ENCODE measurements at regions of chr17 and their contacts with region 1.

Region 1: DNA sequence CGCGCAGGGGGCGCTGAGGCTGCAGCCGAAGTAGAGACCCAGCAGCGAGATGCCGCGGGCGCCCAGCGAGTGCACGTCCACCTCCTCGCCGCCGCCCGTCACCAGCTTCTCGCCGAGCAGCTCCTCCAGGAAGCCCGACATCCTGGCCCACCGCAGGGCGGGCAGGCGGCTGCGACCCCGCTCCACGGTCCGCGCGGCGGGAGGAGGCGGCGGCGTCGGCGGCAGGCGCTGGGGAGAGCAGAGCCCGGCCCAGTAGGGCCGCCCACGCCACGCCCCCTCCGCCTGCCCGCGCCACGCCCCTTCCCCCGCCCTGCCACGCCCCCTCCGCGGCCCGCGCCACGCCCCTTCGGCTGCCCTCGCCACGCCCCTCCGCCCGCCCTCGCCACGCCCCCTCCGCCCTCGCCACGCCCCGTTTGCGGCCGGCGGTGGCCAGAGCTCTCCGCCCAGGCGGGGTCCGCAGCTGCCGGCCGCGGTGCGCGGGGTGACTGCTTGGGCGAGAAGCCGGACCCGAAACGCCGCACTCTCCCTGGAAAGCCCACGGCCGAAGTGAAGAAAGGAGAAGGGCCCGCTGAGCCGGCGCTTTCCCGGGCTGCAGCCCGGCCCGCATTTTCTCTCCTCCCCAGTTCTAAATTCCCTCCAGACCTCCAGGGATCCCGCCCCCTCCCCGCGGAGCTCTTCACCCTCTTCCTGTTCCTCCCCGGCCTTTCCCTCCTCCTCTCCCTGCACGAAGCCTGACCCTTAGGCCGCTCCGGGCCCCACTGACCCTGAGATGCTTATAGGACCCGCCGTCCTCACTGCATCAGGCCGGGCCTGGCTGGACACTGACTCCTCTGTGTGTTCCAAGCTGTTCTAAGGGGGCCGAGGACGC is at the start of gene NXN:
- DNase-seq: peak; percentile 90
- H3K4me3 Mint-ChIP-seq: peak within 1 kb of the TSS; percentile 68
- H3K27ac Mint-ChIP-seq: peak within 1 kb of the TSS; percentile 82
- H3K4me1 Mint-ChIP-seq: peaks cover 18% of the 10 kb centered on the region
- H3K27me3 Mint-ChIP-seq: peaks cover 52% of the 10 kb centered on the region

Region 2: GRCh38 chr17:794876-795275 is 184.9 kb before region 1 on chr17:
- CTCF ChIA-PET with region 1: interaction called, 59 read pairs
- DNase-seq: peak; percentile 66
- H3K4me3 Mint-ChIP-seq: no peak overlapping the region
- H3K27ac Mint-ChIP-seq: no peak overlapping the region
- H3K4me1 Mint-ChIP-seq: peaks cover 7% of the 10 kb centered on the region
- H3K27me3 Mint-ChIP-seq: no peaks in the 10 kb centered on the region

Region 3: GRCh38 chr17:879549-880442 is 100.0 kb before region 1 on chr17:
- CTCF ChIA-PET with region 1: interaction called, 24 read pairs
- DNase-seq: peak; percentile 79
- H3K4me3 Mint-ChIP-seq: no peak overlapping the region
- H3K27ac Mint-ChIP-seq: no peak overlapping the region
- H3K4me1 Mint-ChIP-seq: peaks cover 15% of the 10 kb centered on the region
- H3K27me3 Mint-ChIP-seq: peaks cover 27% of the 10 kb centered on the region

Region 4: DNA sequence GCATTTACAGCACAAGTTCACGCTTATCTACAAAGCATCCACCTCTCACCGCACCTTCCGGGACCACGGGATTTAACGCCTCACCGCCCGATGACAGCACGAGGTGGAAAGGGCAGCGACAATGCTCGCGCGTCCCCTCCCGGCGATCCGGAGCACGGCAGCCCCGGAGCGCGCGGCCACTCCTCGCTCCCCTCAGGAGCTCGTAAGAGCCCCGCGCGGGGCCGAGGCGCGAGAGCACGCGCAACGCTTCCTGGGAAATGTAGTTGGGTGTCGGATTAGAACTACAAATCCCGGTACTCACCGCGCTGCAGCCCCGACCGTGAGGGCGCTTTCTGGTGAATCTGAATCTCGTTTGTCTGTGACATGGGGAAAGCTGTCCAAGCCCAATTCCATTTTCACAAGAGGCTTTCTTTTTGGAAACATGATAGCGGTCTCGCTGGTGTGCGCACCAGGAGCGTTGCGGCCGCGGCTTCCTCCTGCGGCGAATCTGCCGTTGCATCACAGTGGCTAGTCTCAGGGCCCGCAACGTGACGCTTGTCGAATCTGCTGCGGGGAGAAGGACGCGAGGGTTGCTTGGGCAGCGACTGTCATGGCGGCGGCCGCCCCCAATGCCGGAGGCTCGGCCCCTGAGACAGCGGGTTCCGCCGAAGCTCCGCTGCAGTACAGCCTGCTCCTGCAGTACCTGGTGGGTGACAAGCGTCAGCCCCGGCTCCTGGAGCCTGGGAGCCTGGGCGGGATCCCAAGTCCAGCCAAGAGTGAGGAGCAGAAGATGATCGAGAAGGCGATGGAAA is 17.0 kb after region 1 on chr17 and contains the start of gene TIMM22:
- CTCF ChIA-PET with region 1: interaction called, 23 read pairs
- DNase-seq: peak; percentile 95
- H3K4me3 Mint-ChIP-seq: peak within 1 kb of the TSS; percentile 98
- H3K27ac Mint-ChIP-seq: peak within 1 kb of the TSS; percentile 98
- H3K4me1 Mint-ChIP-seq: peaks cover 26% of the 10 kb centered on the region
- H3K27me3 Mint-ChIP-seq: peaks cover 6% of the 10 kb centered on the region